ENCODE measurements at regions of chr4 and their contacts with region 1.

Region 1: DNA sequence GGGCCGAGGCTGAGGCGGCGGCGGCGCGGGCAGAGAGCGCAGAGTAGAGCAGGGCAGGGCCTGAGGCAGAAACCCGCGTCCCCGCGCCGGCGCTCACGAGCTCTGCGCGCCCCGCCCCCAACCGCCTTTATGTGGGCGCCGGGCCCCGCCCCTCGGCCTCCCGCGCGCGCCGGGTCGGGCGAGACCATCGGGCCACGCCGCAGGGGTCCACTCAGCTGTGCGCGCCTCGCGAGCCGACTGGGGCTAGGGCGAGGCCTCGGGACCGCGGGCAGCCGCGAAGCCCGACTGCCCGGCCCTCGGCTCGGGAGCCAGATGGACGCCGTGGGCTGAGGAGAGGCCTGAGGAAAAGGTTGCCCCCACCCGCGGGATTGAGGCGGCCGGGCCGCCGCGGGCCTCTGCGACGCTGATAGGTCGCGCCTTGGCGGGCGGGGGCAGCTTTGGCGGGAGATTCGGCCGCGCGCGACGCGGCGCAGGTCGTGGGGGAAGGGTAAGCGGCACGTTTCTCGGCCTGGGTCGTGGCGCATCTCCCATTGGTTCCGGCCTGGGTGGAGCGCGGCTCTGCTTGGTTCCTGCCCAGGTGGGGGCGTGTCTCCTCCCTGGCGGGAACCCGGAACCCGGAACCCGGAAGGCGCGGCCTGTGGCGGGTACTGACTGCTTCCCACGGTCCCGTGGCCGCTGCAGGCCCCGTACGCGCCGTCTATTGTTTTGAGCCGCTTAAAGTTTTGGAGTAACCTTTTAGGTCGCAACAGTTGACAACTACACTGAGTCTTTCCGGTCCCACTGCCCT is at the start of gene SLBP:
- DNase-seq: peak; percentile 98 to 99
- ATAC-seq: peak; percentile 94
- H3K4me3 ChIP-seq: peak within 1 kb of the TSS; percentile 72 to 92
- H3K27ac ChIP-seq: peak within 1 kb of the TSS; percentile 65 to 92
- H3K4me1 ChIP-seq: no peaks in the 10 kb centered on the region
- H3K27me3 ChIP-seq: no peaks in the 10 kb centered on the region
- total RNA-seq, gene SLBP: 25.1 to 25.3 TPM

Region 2: GRCh38 chr4:1043658-1044468 is 668.5 kb before region 1 on chr4:
- intact Hi-C with region 1: loop called in 1 of 2 experiments (anchors 10 kb)
- DNase-seq: peak; percentile 98 to 99
- ATAC-seq: peak; percentile 88
- H3K4me3 ChIP-seq: no peak overlapping the region
- H3K27ac ChIP-seq: peak overlapping the region; percentile 69 to 82
- H3K4me1 ChIP-seq: no peaks in the 10 kb centered on the region
- H3K27me3 ChIP-seq: no peaks in the 10 kb centered on the region

Region 3: DNA sequence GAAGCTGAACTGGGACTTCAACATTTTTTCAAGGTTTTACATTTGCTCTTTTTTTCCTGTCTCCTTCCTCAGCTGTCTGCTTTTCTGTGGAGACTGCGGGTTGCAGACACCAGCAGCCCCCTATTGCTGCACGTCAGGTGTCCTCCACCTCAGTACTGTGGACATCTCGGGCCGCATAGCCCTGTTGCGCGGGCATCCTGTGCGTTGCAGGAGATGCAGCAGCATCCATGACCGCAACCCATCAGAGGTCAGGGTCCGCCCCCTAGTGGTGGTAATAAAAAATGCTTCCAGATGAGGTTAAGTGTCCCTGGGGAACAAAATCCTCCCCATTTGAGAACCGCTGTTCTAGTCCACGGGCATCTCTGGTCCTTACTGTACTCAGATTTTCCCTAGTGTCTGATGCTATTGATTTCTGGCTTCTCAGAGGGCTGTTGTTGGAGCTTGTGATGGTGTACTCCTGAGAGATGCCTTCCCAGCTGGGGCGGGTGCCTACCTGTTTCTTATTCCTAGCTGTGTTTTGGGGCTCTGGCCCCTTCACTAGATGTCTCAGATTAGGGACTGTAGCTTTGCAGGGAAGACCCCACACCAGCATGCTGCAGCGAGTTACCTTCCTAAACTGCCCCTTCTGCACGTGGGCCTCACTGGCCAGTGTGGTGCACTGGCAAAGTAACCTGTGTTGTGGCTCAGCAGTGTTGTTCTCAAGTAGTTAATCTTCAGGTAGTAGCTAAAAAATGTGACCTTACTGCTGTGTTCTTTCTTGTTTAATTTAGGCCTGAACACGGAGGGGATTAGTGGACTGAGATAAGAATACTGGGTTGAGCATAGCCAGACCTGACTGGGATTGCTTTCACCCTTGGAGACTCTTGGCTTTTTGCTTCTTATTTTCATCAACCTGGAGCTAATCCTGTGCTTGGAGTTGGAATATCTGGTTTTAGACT is 187.0 kb after region 1 on chr4:
- intact Hi-C with region 1: no loop called
- DNase-seq: peak; percentile 75 to 87
- ATAC-seq: peak; percentile 77
- H3K4me3 ChIP-seq: no peak overlapping the region
- H3K27ac ChIP-seq: no peak overlapping the region
- H3K4me1 ChIP-seq: no peaks in the 10 kb centered on the region
- H3K27me3 ChIP-seq: no peaks in the 10 kb centered on the region

Measured in aorta (tissue), 5 donors.